GM10248 (cell line): ENCODE measurements at regions of chr10 and their contacts with region 1.

Region 1: GRCh38 chr10:98045785-98046389 is 15.5 kb upstream of the CRTAC1 start:
- DNase-seq: peak; percentile 71
- CTCF ChIP-seq: peak; percentile 91

Region 2: GRCh38 chr10:97701438-97702069 is 344.3 kb before region 1 on chr10:
- CTCF ChIA-PET with region 1: interaction called, 13 read pairs
- POLR2A ChIA-PET with region 1: no interaction called
- DNase-seq: peak; percentile 82
- CTCF ChIP-seq: peak; percentile 89

Region 3: GRCh38 chr10:97903128-97904017 is 142.5 kb before region 1 on chr10:
- CTCF ChIA-PET with region 1: interaction called, 46 read pairs
- POLR2A ChIA-PET with region 1: no interaction called
- DNase-seq: no peak
- CTCF ChIP-seq: no peak

Region 4: DNA sequence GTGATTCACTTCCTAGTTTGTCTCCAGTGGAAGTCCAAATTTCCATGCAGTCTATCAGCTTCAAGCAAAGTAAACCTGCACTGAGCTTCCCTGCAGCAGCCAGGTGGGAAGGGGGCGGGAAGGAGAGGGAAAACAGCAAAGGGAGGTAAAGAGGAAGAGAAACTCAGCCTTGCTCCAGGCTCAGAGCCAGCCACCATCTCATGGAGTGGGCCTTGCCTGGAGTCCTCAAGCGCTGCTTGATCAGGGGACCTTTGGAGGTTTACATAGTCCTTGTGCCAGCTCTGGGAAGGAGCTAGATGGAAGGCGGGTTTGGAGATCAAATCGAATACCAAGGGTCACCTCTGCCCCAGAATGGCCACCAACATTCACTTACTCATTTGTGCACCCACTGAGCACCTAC is 22.9 kb before region 1 on chr10:
- CTCF ChIA-PET with region 1: interaction called, 58 read pairs
- POLR2A ChIA-PET with region 1: no interaction called
- DNase-seq: no peak
- CTCF ChIP-seq: no peak

Region 5: DNA sequence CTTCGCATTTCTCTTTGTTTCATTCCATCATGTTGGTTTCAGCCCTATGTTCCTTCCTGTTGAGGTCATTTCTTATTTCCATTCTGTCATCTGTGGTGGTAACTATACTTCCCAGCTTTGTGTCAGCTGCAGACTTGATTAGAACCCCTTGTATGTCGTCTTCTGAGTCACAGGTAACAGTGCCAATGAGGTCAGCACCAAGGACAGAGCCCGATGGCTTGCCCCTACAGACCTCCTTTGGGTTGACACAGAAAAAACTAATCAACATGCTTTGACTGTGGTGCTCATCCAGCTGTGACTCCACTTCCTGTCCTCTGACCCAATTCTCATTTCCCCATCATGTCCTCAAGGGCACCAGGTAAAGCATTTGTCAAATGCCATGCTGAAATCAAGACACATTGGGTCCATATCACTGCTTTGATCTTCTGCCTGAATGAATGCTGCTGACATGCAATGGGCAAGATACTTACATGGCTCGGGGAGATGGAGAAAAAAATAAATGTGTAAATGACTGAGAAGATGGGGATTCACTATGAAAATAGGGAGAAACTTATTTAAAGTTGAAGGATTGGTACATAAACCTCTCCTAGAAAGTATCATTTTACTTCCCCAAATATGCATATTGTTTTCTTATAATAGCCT is 10.1 kb after region 1 on chr10:
- CTCF ChIA-PET with region 1: interaction called, 64 read pairs
- POLR2A ChIA-PET with region 1: no interaction called
- DNase-seq: no peak
- CTCF ChIP-seq: no peak